ENCODE measurements at regions of chr5 and their contacts with region 1.

Region 1: GRCh38 chr5:31113101-31113500 is 80.4 kb upstream of the CDH6 start:
- DNase-seq: no peak
- H3K4me3 ChIP-seq: no peak overlapping the region
- H3K27ac ChIP-seq: no peak overlapping the region
- H3K4me1 ChIP-seq: no peaks in the 10 kb centered on the region
- H3K27me3 ChIP-seq: no peaks in the 10 kb centered on the region
- CTCF ChIP-seq: no peak

Region 2: DNA sequence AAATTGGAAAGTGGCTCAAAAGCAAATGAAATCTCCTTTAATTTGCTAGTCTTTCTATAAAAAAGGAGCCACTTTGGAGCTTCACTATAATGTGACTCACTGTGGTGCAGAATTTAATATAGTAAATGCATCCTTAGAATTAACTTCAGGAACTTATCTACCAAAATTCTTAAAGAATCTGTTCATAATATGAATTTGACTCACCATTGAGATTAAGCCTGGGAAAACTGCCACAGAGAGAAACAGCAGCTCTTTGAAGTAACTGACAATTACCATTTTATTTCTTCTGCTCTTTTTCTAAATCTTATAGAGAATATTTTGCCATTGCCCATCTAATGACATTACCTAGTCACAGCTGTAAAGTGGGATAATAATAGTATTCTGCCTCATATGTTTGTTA is 131.5 kb before region 1 on chr5:
- CTCF ChIA-PET with region 1: no interaction called
- POLR2A ChIA-PET with region 1: no interaction called
- intact Hi-C with region 1: no loop called
- DNase-seq: no peak
- H3K4me3 ChIP-seq: no peak overlapping the region
- H3K27ac ChIP-seq: no peak overlapping the region
- H3K4me1 ChIP-seq: no peaks in the 10 kb centered on the region
- H3K27me3 ChIP-seq: no peaks in the 10 kb centered on the region
- CTCF ChIP-seq: no peak

Region 3: DNA sequence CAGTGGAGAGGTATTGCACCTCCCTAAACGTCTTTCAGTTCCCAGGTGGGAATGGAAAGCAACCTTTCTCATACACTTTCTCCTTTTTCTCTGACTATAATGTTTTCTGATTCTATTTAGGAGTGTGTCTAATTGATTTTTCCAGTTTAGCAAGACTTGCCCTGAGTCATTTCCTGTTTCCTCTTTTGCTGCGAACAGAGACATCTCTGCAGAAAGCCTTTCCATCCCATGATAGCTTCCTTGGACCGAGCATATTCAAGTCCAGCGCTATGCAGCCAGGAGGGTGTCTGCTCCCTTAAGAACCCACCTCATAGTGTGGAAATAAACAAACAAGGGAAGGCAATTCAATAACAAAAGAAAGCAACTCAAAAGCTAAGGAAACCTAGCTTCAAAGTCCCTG is 20.4 kb after region 1 on chr5:
- CTCF ChIA-PET with region 1: no interaction called
- POLR2A ChIA-PET with region 1: interaction called, 11 read pairs
- intact Hi-C with region 1: no loop called
- DNase-seq: peak; percentile 94
- H3K4me3 ChIP-seq: no peak overlapping the region
- H3K27ac ChIP-seq: peak overlapping the region; percentile 28
- H3K4me1 ChIP-seq: peaks cover 34% of the 10 kb centered on the region
- H3K27me3 ChIP-seq: no peaks in the 10 kb centered on the region
- CTCF ChIP-seq: no peak

Region 4: GRCh38 chr5:31156631-31157160 is 43.6 kb after region 1 on chr5:
- CTCF ChIA-PET with region 1: no interaction called
- POLR2A ChIA-PET with region 1: interaction called, 10 read pairs
- intact Hi-C with region 1: no loop called
- DNase-seq: no peak
- H3K4me3 ChIP-seq: no peak overlapping the region
- H3K27ac ChIP-seq: no peak overlapping the region
- H3K4me1 ChIP-seq: peaks cover 30% of the 10 kb centered on the region
- H3K27me3 ChIP-seq: no peaks in the 10 kb centered on the region
- CTCF ChIP-seq: no peak

Region 5: GRCh38 chr5:31442058-31442745 is 329.1 kb after region 1 on chr5:
- CTCF ChIA-PET with region 1: no interaction called
- POLR2A ChIA-PET with region 1: no interaction called
- intact Hi-C with region 1: no loop called
- DNase-seq: no peak
- H3K4me3 ChIP-seq: no peak overlapping the region
- H3K27ac ChIP-seq: no peak overlapping the region
- H3K4me1 ChIP-seq: peaks cover 10% of the 10 kb centered on the region
- H3K27me3 ChIP-seq: no peaks in the 10 kb centered on the region
- CTCF ChIP-seq: no peak